ENCODE measurements at regions of chr5 and their contacts with region 1.

Region 1: GRCh38 chr5:141524604-141525597 is 36.0 kb downstream of the PCDHGC5 start:
- DNase-seq: peak; percentile 88 to 91 (median 88)
- ATAC-seq: peak; percentile 53 to 73 (median 64)
- H3K4me3 ChIP-seq: no peak overlapping the region
- H3K27ac ChIP-seq: peak overlapping the region in 11 of 12 donors; percentile 38 to 95 (median 75)
- H3K4me1 ChIP-seq: peaks cover 12 to 77% (median 66%) of the 10 kb centered on the region in 12 donors
- H3K27me3 ChIP-seq: no peaks in the 10 kb centered on the region
- CTCF ChIP-seq: peak; percentile 98 to 100 (median 100)
- POLR2A ChIP-seq: no peak

Region 2: GRCh38 chr5:141320225-141321169 is 204.4 kb before region 1 on chr5 and contains the start of gene TAF7:
- intact Hi-C with region 1: loop called in 1 of 10 experiments (anchors 10 kb)
- DNase-seq: peak; percentile 89 to 96 (median 93)
- ATAC-seq: peak; percentile 99 to 100 (median 100)
- H3K4me3 ChIP-seq: peak within 1 kb of the TSS; percentile 32 to 88 (median 74)
- H3K27ac ChIP-seq: peak within 1 kb of the TSS; percentile 85 to 97 (median 92)
- H3K4me1 ChIP-seq: peaks cover 0 to 18% (median 8%) of the 10 kb centered on the region in 12 donors
- H3K27me3 ChIP-seq: no peaks in the 10 kb centered on the region
- CTCF ChIP-seq: peak; percentile 70 to 91 (median 86)
- POLR2A ChIP-seq: peak; percentile 91 to 94
- total RNA-seq, gene TAF7: 73.9 to 107 (median 99.9) TPM

Region 3: GRCh38 chr5:141338538-141339306 is 186.2 kb before region 1 on chr5 and contains the start of gene PCDHGA2:
- intact Hi-C with region 1: loop called in 2 of 10 experiments (anchors 5 to 10 kb)
- DNase-seq: peak in 2 of 5 donors; percentile 52 to 54
- ATAC-seq: peak; percentile 66 to 70 (median 69)
- H3K4me3 ChIP-seq: peak within 1 kb of the TSS; percentile 3 to 61 (median 51)
- H3K27ac ChIP-seq: peak within 1 kb of the TSS; percentile 21 to 82 (median 75)
- H3K4me1 ChIP-seq: peaks cover 0 to 7% (median 0%) of the 10 kb centered on the region in 12 donors
- H3K27me3 ChIP-seq: peaks cover 0 to 34% (median 0%) of the 10 kb centered on the region in 9 donors
- CTCF ChIP-seq: peak; percentile 30 to 73 (median 53)
- POLR2A ChIP-seq: no peak
- total RNA-seq, gene PCDHGA2: 5.8 to 15.1 (median 10.7) TPM

Region 4: GRCh38 chr5:141412854-141413539 is 111.9 kb before region 1 on chr5 and contains the start of gene PCDHGA10:
- intact Hi-C with region 1: loop called in 6 of 10 experiments (anchors 2 to 10 kb)
- DNase-seq: peak in 3 of 5 donors; percentile 53 to 61 (median 59)
- ATAC-seq: peak; percentile 24 to 66 (median 64)
- H3K4me3 ChIP-seq: peak within 1 kb of the TSS in 10 of 12 donors; percentile 10 to 49 (median 36)
- H3K27ac ChIP-seq: peak within 1 kb of the TSS in 1 of 12 donors; percentile 36
- H3K4me1 ChIP-seq: peaks cover 0 to 4% (median 0%) of the 10 kb centered on the region in 12 donors
- H3K27me3 ChIP-seq: peaks cover 0 to 78% (median 0%) of the 10 kb centered on the region in 9 donors
- CTCF ChIP-seq: peak; percentile 26 to 60 (median 42)
- POLR2A ChIP-seq: no peak
- total RNA-seq, gene PCDHGA10: 3.3 to 11.3 (median 6.1) TPM

Region 5: DNA sequence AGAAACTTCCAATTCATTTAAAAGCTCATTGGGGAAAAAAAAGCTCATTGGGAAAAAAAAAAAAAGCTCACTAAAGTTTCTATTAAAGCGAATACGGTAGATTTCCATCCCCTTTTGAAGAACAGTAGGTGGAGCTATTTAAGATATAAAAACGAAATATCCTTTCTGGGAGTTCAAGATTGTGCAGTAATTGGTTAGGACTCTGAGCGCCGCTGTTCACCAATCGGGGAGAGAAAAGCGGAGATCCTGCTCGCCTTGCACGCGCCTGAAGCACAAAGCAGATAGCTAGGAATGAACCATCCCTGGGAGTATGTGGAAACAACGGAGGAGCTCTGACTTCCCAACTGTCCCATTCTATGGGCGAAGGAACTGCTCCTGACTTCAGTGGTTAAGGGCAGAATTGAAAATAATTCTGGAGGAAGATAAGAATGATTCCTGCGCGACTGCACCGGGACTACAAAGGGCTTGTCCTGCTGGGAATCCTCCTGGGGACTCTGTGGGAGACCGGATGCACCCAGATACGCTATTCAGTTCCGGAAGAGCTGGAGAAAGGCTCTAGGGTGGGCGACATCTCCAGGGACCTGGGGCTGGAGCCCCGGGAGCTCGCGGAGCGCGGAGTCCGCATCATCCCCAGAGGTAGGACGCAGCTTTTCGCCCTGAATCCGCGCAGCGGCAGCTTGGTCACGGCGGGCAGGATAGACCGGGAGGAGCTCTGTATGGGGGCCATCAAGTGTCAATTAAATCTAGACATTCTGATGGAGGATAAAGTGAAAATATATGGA is 94.4 kb before region 1 on chr5 and contains the start of gene PCDHGA12:
- intact Hi-C with region 1: loop called in 3 of 10 experiments (anchors 1 to 5 kb)
- DNase-seq: peak in 4 of 5 donors; percentile 56 to 77 (median 65)
- ATAC-seq: peak; percentile 67 to 94 (median 86)
- H3K4me3 ChIP-seq: peak within 1 kb of the TSS in 11 of 12 donors; percentile 19 to 58 (median 42)
- H3K27ac ChIP-seq: peak within 1 kb of the TSS in 8 of 12 donors; percentile 10 to 67 (median 40)
- H3K4me1 ChIP-seq: peaks cover 0 to 16% (median 0%) of the 10 kb centered on the region in 12 donors
- H3K27me3 ChIP-seq: peaks cover 0 to 52% (median 0%) of the 10 kb centered on the region in 9 donors
- CTCF ChIP-seq: peak; percentile 34 to 73 (median 55)
- POLR2A ChIP-seq: no peak
- total RNA-seq, gene PCDHGA12: 3.2 to 15.5 (median 7.3) TPM

Region 6: GRCh38 chr5:141557681-141558136 is 32.8 kb after region 1 on chr5:
- intact Hi-C with region 1: loop called in 8 of 10 experiments (anchors 1 to 5 kb)
- DNase-seq: peak; percentile 86 to 93 (median 88)
- ATAC-seq: peak; percentile 81 to 87 (median 85)
- H3K4me3 ChIP-seq: peak overlapping the region in 10 of 12 donors; percentile 10 to 47 (median 36)
- H3K27ac ChIP-seq: peak overlapping the region; percentile 70 to 94 (median 88)
- H3K4me1 ChIP-seq: peaks cover 3 to 44% (median 32%) of the 10 kb centered on the region in 12 donors
- H3K27me3 ChIP-seq: no peaks in the 10 kb centered on the region
- CTCF ChIP-seq: peak; percentile 83 to 92 (median 88)
- POLR2A ChIP-seq: peak in 1 of 2 donors; percentile 39

Region 7: DNA sequence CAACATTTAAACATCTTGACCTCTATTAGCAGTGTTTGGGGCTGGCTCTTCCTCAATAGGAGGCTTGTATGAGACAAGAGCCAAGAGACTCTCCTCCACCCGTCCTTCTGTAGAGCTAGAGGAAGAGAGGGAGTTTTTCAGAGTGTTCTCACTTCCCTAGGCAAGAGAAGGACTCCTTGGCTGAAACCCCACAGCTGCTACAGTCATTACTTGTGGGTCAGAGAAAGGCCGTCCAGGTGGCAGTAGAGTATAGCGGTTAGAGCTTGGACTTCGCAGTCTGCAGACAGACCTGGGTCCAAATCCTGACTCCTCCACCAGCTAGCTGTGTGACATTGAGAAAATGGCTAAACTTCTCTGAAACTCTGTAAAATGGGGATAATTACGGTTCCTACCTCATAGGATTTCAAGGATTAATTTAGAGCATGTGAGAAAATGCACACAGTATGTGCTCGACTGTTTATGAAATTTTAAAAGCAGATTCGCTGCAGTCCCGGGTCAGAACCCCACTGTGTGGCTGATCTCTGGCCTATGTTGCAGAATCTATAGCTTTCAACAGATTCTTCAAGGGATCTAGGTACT is 238.0 kb after region 1 on chr5:
- intact Hi-C with region 1: no loop called
- DNase-seq: peak in 3 of 5 donors; percentile 10 to 45 (median 42)
- ATAC-seq: peak; percentile 40 to 89 (median 56)
- H3K4me3 ChIP-seq: no peak overlapping the region
- H3K27ac ChIP-seq: no peak overlapping the region
- H3K4me1 ChIP-seq: peaks cover 0 to 29% (median 16%) of the 10 kb centered on the region in 12 donors
- H3K27me3 ChIP-seq: peaks cover 0 to 24% (median 8%) of the 10 kb centered on the region in 9 donors
- CTCF ChIP-seq: peak in 7 of 12 donors; percentile 19 to 46 (median 24)
- POLR2A ChIP-seq: no peak